ENCODE measurements at regions of chr17 and their contacts with region 1.

Region 1: GRCh38 chr17:64063766-64064224 is 43.4 kb upstream of the ICAM2 start:
- DNase-seq: peak; percentile 82
- H3K4me3 Mint-ChIP-seq: peak overlapping the region; percentile 16
- H3K27ac Mint-ChIP-seq: peak overlapping the region; percentile 66
- H3K4me1 Mint-ChIP-seq: peaks cover 67% of the 10 kb centered on the region
- H3K27me3 Mint-ChIP-seq: no peaks in the 10 kb centered on the region

Region 2: GRCh38 chr17:64073771-64074703 is 10.2 kb after region 1 on chr17:
- CTCF ChIA-PET with region 1: interaction called, 27 read pairs
- intact Hi-C with region 1: no loop called
- DNase-seq: no peak
- H3K4me3 Mint-ChIP-seq: no peak overlapping the region
- H3K27ac Mint-ChIP-seq: no peak overlapping the region
- H3K4me1 Mint-ChIP-seq: peaks cover 22% of the 10 kb centered on the region
- H3K27me3 Mint-ChIP-seq: no peaks in the 10 kb centered on the region

Region 3: GRCh38 chr17:64081802-64082799 is 18.3 kb after region 1 on chr17:
- CTCF ChIA-PET with region 1: interaction called, 27 read pairs
- intact Hi-C with region 1: loop called (anchors 1 kb)
- DNase-seq: peak; percentile 65
- H3K4me3 Mint-ChIP-seq: peak overlapping the region; percentile 38
- H3K27ac Mint-ChIP-seq: no peak overlapping the region
- H3K4me1 Mint-ChIP-seq: peaks cover 7% of the 10 kb centered on the region
- H3K27me3 Mint-ChIP-seq: no peaks in the 10 kb centered on the region

Region 4: GRCh38 chr17:64091116-64091515 is 27.3 kb after region 1 on chr17:
- CTCF ChIA-PET with region 1: interaction called, 4 read pairs
- intact Hi-C with region 1: loop called (anchors 2 kb)
- DNase-seq: peak; percentile 34
- H3K4me3 Mint-ChIP-seq: no peak overlapping the region
- H3K27ac Mint-ChIP-seq: peak overlapping the region; percentile 80
- H3K4me1 Mint-ChIP-seq: peaks cover 71% of the 10 kb centered on the region
- H3K27me3 Mint-ChIP-seq: no peaks in the 10 kb centered on the region

Region 5: GRCh38 chr17:64117981-64118979 is 54.5 kb after region 1 on chr17:
- CTCF ChIA-PET with region 1: interaction called, 12 read pairs
- intact Hi-C with region 1: loop called (anchors 1 kb)
- DNase-seq: no peak
- H3K4me3 Mint-ChIP-seq: no peak overlapping the region
- H3K27ac Mint-ChIP-seq: no peak overlapping the region
- H3K4me1 Mint-ChIP-seq: peaks cover 69% of the 10 kb centered on the region
- H3K27me3 Mint-ChIP-seq: no peaks in the 10 kb centered on the region